ENCODE measurements at regions of chr15 and their contacts with region 1.

Region 1: GRCh38 chr15:31435261-31435911 is 108.8 kb downstream of the KLF13 start:
- DNase-seq: peak; percentile 87
- ATAC-seq: peak; percentile 86

Region 2: DNA sequence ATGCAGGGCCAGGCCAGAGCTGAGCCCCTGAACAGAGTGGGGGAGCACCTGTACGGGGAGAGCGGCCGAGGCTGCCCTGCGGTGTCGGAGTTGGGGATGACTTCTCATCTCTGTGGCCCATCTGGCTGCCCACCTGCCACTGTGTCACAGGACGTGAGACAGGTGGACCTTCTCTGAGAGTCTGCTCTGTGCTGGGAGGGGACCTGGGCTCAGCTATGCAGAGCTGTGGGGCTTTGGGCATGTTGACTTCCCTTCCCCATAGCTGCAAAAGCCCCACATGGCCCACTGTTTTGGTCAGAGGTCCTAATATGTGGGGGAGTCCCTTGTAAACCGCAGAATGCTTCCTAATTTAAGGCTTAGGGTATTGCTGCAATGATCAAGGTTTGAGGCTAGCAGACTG is 265.8 kb before region 1 on chr15:
- intact Hi-C with region 1: no loop called
- DNase-seq: no peak
- ATAC-seq: no peak

Region 3: GRCh38 chr15:31200735-31201151 is 234.6 kb before region 1 on chr15:
- intact Hi-C with region 1: loop called (anchors 1 kb)
- DNase-seq: peak; percentile 87
- ATAC-seq: peak; percentile 92

Region 4: GRCh38 chr15:31338879-31339557 is 96.4 kb before region 1 on chr15:
- intact Hi-C with region 1: no loop called
- DNase-seq: peak; percentile 88
- ATAC-seq: peak; percentile 65

Region 5: GRCh38 chr15:31396881-31397560 is 38.4 kb before region 1 on chr15:
- intact Hi-C with region 1: loop called (anchors 1 kb)
- DNase-seq: peak; percentile 97
- ATAC-seq: peak; percentile 92

Region 6: DNA sequence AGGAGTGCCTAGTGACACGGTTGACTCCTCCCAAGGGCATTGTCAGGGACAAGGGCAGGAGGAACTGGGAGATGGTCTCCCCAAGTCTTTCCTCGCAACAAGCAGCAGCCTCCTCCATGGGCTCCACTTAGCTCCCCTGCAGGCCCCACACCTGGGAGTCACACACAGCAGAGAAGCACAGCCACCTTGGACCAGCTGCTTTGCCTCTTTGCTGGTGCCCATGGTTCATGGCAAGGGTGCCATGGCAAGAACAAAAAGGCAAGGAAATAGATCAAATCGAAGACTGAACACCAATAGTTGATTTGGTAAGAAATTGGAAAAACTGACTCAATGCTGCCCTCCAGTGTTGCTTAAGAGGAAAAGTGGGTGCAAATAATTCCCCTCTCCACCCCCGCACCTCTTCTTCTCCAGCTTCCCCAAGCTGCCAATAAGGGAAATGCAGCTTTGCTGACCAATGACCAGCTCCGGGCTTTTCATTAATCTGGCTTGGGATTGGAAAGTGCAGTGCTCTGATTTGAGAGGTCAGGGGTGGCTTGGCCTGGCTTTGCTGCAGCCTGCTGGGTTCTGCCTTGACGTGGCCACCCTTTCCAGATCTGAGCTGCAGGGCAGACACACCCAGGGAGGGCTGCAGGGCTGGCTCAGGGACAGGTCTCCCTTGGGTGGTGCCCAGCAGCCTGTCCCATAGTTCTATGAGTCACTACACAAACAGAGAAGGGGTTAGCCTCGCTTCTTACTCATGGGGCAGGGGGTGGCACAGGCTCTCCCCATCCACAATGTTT is 53.2 kb after region 1 on chr15:
- intact Hi-C with region 1: loop called (anchors 1 kb)
- DNase-seq: peak; percentile 77
- ATAC-seq: peak; percentile 71